AG04450 (cell line): ENCODE measurements at regions of chr17 and their contacts with region 1.

Region 1: GRCh38 chr17:28726226-28727130 is at the start of gene TLCD1:
- DNase-seq: peak; percentile 84
- H3K4me3 ChIP-seq: peak within 1 kb of the TSS; percentile 71
- H3K27ac ChIP-seq: peak within 1 kb of the TSS; percentile 77
- H3K27me3 ChIP-seq: no peaks in the 10 kb centered on the region
- CTCF ChIP-seq: peak; percentile 98
- polyA plus RNA-seq, gene TLCD1: 11.8 and 13.1 TPM in 2 replicates

Region 2: DNA sequence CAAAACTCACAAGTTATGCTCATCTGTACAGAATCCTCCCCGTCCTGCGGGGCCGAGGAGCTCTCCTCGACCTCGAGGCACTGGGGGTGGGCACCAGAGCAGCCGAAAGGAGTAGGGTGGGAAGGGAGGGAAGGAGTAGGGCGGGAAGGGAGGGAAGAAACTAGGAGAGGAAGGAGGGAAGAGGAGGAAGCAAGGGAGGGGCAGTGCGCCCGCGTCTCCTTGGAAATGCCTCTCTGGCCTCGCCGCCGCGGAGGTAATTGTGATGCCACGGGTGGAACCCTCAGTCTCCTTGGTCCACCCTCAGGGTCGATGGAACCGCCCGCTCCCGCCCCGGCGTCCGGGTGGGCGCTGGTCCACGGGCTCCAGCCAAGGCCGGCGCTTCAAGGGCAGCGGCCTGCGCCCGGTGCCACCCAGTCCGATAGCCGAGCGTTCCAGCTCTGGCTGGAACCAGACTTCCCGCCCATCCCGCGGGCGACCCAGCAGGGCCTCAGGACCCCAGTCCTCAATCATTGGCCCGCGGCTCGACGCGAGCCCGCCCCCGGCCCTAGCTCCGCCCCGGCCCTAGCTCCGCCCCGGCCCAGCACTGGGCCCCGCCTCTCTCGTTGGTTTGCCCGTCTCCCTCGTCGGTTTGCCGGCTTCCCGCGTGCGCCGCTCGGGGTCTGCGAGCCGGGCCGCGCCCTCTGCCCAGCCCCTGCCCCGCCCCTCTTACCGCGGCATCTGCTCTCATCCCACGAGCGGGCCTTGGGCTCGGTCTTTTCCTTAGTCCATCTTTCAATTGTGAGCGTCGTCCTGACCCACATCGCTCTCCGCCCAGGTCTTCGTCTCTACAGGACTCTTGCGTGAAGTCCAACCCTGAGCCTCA is 15.4 kb before region 1 on chr17:
- CTCF ChIA-PET with region 1: interaction called, 6 read pairs
- POLR2A ChIA-PET with region 1: interaction called, 40 read pairs
- DNase-seq: peak; percentile 68
- H3K4me3 ChIP-seq: peak overlapping the region; percentile 64
- H3K27ac ChIP-seq: peak overlapping the region; percentile 78
- H3K27me3 ChIP-seq: no peaks in the 10 kb centered on the region
- CTCF ChIP-seq: no peak

Region 3: DNA sequence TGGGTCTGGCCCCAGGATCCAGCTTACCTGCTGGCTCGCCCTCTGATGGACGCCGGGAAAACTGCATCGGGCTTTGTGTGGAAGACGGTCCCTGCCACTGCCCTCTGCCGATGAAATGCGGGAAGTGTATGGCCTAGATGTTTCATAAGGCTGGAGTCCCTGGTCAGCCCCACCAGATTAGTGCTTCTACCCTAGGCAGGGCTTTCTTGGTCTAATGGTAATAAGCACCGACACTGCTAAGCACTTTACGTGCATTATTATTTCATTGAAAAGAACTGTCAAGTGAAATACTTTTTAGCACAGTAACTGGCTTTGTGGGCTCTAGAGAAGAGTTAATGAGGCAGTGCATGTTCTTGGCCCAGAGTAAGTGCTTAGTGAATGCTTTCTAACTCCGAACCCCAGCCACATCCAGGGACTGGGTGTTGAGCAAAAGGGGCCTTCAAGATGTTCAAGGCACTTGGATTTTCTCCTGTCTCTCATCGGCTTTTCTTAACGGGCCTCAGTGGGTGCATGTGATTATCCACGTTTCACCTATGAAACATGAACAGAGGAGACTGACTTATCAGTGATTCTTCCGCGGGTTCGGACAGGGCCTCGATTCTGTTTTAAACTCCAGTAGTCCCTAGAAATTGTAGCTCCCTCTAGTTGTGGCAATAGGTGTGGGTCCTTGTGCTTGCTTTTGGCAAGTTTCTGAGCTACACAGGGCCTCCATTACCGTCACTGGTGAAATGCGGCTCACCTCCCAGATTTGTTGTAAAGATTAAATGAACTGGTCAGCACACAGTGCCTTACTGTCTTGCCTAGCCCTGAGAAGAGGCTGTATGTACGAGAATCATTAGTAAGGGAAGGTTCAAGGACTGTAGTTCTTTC is 23.9 kb after region 1 on chr17:
- CTCF ChIA-PET with region 1: interaction called, 193 read pairs
- POLR2A ChIA-PET with region 1: interaction called, 93 read pairs
- DNase-seq: peak; percentile 88
- H3K4me3 ChIP-seq: no peak overlapping the region
- H3K27ac ChIP-seq: peak overlapping the region; percentile 11
- H3K27me3 ChIP-seq: no peaks in the 10 kb centered on the region
- CTCF ChIP-seq: peak; percentile 100

Region 4: GRCh38 chr17:28908640-28909167 is 182.2 kb after region 1 on chr17:
- CTCF ChIA-PET with region 1: interaction called, 29 read pairs
- POLR2A ChIA-PET with region 1: no interaction called
- DNase-seq: peak; percentile 68
- H3K4me3 ChIP-seq: no peak overlapping the region
- H3K27ac ChIP-seq: peak overlapping the region; percentile 84
- H3K27me3 ChIP-seq: no peaks in the 10 kb centered on the region
- CTCF ChIP-seq: no peak

Region 5: GRCh38 chr17:28946239-28946638 is 219.8 kb after region 1 on chr17:
- CTCF ChIA-PET with region 1: interaction called, 66 read pairs
- POLR2A ChIA-PET with region 1: interaction called, 27 read pairs
- DNase-seq: no peak
- H3K4me3 ChIP-seq: no peak overlapping the region
- H3K27ac ChIP-seq: no peak overlapping the region
- H3K27me3 ChIP-seq: no peaks in the 10 kb centered on the region
- CTCF ChIP-seq: no peak

Region 6: DNA sequence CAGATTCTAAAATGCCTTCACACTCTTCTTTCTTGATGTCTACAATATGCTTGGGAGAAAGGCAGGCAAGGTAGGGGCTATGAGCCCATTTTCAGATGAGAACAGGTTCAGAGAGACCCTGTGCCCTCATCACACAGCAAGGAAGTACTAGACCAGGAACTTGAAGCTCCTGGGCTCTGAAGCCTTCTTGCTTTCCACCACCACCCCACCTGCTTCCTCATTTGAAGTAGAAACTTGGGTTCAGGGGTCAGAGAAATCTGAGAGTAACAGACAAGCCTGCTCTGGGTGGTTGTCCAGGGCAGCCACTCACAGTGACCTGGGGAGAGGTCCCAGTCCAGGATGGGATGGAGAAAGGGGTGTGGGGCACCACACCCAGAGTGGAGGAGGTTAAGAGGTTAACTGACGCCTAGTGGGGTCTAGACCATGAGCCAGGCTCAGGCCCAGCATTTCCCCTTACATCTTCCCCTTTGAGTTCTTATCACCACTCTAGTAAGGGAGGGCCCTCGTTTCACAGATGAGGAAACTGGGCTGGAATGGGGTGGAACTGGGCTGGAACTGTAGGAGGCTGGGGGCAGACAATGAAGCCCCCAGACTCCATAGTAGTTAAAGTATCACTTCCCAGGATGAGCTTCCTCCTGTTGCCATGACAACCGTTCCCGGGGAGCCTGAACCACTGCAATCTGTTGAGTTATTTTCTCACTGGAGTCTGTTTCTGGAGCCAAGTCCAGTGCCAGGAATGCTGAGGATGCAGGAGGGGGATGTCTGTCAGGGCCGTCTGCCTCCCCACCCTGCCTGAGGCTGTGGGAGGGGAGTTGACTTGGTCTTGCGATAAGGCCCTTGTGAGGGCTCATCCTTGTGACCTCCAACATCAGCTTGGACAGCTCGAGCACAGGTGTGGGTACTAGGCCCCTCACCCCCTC is 241.0 kb after region 1 on chr17:
- CTCF ChIA-PET with region 1: interaction called, 22 read pairs
- POLR2A ChIA-PET with region 1: no interaction called
- DNase-seq: no peak
- H3K4me3 ChIP-seq: no peak overlapping the region
- H3K27ac ChIP-seq: no peak overlapping the region
- H3K27me3 ChIP-seq: peaks cover 34% of the 10 kb centered on the region
- CTCF ChIP-seq: no peak